ENCODE measurements at regions of chr1 and their contacts with region 1.

Region 1: GRCh38 chr1:99180343-99180808 is 83.9 kb upstream of the PLPPR4 start:
- DNase-seq: peak in 8 of 9 donors; percentile 17 to 65 (median 51)
- ATAC-seq: peak; percentile 82
- H3K4me3 ChIP-seq: no peak overlapping the region
- H3K4me3 Mint-ChIP-seq: no peak overlapping the region
- H3K27ac ChIP-seq: no peak overlapping the region
- H3K27ac Mint-ChIP-seq: no peak overlapping the region
- H3K4me1 ChIP-seq: no peaks in the 10 kb centered on the region
- H3K4me1 Mint-ChIP-seq: no peaks in the 10 kb centered on the region
- H3K27me3 ChIP-seq: no peaks in the 10 kb centered on the region
- H3K27me3 Mint-ChIP-seq: peaks cover 0 to 6% (median 0%) of the 10 kb centered on the region in 5 donors

Region 2: DNA sequence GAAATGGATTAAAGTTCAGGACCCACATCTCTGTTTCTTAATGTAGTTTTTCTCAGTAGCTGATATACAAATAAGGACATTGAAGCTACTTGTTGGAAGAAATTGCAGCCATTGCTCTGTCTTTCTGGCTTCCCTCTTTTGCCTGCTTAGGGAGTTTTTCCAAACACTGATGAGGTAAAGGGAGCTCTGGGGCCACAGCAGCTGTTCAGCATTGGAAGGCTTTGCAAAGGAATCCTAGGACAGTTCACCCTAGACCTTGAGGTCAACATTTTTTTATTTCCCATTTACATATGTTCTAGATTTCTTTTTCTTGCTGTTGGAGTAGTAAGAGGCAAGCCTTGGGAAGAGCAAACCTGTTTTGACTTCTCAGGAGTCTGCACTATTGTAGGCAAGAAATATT is 48.8 kb before region 1 on chr1:
- CTCF ChIA-PET with region 1: no interaction called
- POLR2A ChIA-PET with region 1: no interaction called
- intact Hi-C with region 1: no loop called
- DNase-seq: no peak
- ATAC-seq: no peak
- H3K4me3 ChIP-seq: no peak overlapping the region
- H3K4me3 Mint-ChIP-seq: no peak overlapping the region
- H3K27ac ChIP-seq: no peak overlapping the region
- H3K27ac Mint-ChIP-seq: no peak overlapping the region
- H3K4me1 ChIP-seq: no peaks in the 10 kb centered on the region
- H3K4me1 Mint-ChIP-seq: no peaks in the 10 kb centered on the region
- H3K27me3 ChIP-seq: no peaks in the 10 kb centered on the region
- H3K27me3 Mint-ChIP-seq: peaks cover 0 to 19% (median 11%) of the 10 kb centered on the region in 5 donors

Region 3: DNA sequence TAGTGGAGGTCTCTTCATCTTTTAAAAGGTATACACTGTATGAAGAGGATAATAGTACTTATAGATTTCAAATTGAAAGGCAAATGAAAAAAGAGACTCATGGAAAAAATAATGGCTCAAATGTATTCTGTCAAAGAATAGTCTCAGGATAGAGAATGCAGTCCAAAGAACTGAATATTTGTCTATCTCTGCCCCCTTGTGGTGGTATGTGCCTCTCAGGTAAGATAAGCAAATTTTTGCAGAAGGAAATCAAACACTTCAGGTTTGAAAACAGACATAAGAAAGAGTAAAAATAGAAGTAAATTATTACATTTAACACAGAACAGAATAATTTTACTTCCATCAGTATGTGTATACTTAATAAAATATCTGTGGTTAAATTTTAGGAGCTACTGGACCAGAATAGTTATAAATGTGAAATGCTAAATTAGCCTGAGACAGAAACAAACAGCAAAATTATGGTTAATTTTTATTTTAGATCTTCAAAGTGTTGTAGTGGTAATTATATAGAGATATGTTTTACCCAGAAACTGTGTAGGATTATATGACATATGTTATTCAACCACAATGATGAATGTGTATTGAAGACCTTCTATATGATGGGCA is 301.1 kb after region 1 on chr1:
- CTCF ChIA-PET with region 1: interaction called, 4 read pairs
- POLR2A ChIA-PET with region 1: no interaction called
- intact Hi-C with region 1: loop called (anchors 1 kb)
- DNase-seq: peak in 7 of 9 donors; percentile 6 to 61 (median 47)
- ATAC-seq: peak; percentile 59
- H3K4me3 ChIP-seq: no peak overlapping the region
- H3K4me3 Mint-ChIP-seq: no peak overlapping the region
- H3K27ac ChIP-seq: no peak overlapping the region
- H3K27ac Mint-ChIP-seq: no peak overlapping the region
- H3K4me1 ChIP-seq: no peaks in the 10 kb centered on the region
- H3K4me1 Mint-ChIP-seq: no peaks in the 10 kb centered on the region
- H3K27me3 ChIP-seq: no peaks in the 10 kb centered on the region
- H3K27me3 Mint-ChIP-seq: peaks cover 8 to 35% (median 17%) of the 10 kb centered on the region in 5 donors

Region 4: DNA sequence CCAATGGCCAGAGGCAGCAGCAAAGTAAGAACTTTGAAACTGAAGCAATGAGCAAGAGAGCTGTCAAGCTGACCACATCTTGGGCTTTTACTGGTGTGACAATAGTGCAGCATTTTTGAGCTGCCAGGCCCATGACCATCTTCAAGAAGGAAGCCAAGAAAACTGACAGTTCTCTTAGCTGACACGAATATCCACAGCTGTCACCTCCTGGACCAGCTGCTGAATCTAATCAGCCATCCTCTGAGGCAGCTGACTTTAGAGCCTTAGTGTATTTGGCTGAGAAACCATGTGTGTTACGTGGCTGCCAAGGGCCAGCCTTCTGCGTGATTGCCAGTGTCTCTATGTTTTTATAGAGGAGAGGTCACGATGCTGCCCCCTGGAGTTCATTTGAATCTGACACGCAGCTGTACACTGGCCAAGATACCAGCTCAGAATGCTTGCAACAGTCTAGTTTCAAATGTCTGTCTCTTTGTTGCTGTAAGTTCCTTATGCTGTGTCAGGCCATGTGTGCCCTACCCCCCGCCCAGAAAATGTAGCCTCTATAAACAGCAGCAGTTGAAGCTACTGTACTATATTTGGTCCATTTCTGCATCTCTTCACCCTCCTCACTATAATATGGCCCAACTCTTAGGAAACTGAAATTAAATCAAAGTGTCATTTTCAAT is 505.3 kb after region 1 on chr1:
- CTCF ChIA-PET with region 1: no interaction called
- POLR2A ChIA-PET with region 1: no interaction called
- intact Hi-C with region 1: loop called (anchors 1 kb)
- DNase-seq: peak in 4 of 9 donors; percentile 6 to 22 (median 8)
- ATAC-seq: peak; percentile 61
- H3K4me3 ChIP-seq: no peak overlapping the region
- H3K4me3 Mint-ChIP-seq: no peak overlapping the region
- H3K27ac ChIP-seq: no peak overlapping the region
- H3K27ac Mint-ChIP-seq: no peak overlapping the region
- H3K4me1 ChIP-seq: no peaks in the 10 kb centered on the region
- H3K4me1 Mint-ChIP-seq: no peaks in the 10 kb centered on the region
- H3K27me3 ChIP-seq: peaks cover 0 to 3% of the 10 kb centered on the region in 2 donors
- H3K27me3 Mint-ChIP-seq: peaks cover 0 to 16% (median 15%) of the 10 kb centered on the region in 5 donors